Caco-2 (cell line): ENCODE measurements at regions of chr1 and their contacts with region 1.

Region 1: DNA sequence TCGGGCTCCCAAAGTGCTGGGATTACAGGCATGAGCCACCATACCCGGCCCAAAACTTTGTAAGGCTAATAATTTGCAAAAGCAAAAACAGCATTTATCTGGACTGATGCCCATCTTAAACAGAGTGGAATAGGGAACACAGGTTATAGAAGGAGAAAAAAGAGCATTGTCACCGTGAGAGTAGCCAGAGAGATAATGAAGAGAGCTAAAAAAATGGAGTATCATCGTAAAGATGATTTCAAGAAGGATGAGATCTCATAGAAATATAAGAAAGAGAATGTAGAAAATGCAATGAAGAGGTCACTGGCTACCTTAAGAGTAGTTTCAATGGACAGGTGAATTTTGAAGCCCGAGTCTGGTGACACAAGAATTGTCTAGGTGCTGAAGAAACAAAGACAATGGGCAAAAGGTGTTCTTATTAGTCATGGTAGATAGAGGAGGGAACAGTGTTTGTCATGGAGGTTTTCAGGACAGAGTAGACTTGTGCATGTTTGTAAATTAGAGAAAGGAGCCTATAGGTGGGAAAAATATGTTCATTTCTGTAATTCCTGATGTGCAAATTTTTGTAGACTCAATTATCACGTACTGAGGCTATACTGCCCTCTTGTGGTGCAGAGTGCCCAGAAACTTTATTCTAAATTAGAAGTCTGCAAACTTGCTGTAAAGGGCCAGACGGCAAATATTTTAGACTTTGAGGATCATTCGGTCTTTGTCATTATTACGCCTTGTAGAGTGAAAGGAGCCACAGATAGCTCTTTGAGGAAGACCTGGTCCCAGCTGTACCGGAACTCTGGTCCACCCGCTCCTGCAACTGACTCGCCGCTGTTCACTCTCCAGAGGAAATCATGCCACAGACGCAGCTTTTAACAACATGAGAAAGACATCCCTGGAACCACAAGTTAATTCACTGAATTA is 8.1 kb upstream of the TMEM183A start:
- DNase-seq: peak in 1 of 2 experiments; percentile 67
- H3K4me3 ChIP-seq: no peak overlapping the region
- H3K4me3 Mint-ChIP-seq: no peak overlapping the region
- H3K27ac Mint-ChIP-seq: no peak overlapping the region
- H3K4me1 ChIP-seq: peaks cover 8% of the 10 kb centered on the region
- H3K4me1 Mint-ChIP-seq: peaks cover 7% of the 10 kb centered on the region
- H3K27me3 ChIP-seq: no peaks in the 10 kb centered on the region
- H3K27me3 Mint-ChIP-seq: peaks cover 7% of the 10 kb centered on the region
- CTCF ChIP-seq: peak; percentile 74 to 86

Region 2: GRCh38 chr1:202888531-202889360 is 110.3 kb before region 1 on chr1 and contains the start of gene RABIF:
- CTCF ChIA-PET with region 1: no interaction called
- POLR2A ChIA-PET with region 1: no interaction called
- intact Hi-C with region 1: loop called (anchors 2 kb)
- DNase-seq: peak; percentile 96 to 97
- H3K4me3 ChIP-seq: peak within 1 kb of the TSS; percentile 52
- H3K4me3 Mint-ChIP-seq: peak within 1 kb of the TSS; percentile 80
- H3K27ac Mint-ChIP-seq: peak within 1 kb of the TSS; percentile 87
- H3K4me1 ChIP-seq: 0 out of 2 replicates have a peak, but pooled peaks cover 4% of the 10 kb centered on the region
- H3K4me1 Mint-ChIP-seq: peaks cover 15% of the 10 kb centered on the region
- H3K27me3 ChIP-seq: no peaks in the 10 kb centered on the region
- H3K27me3 Mint-ChIP-seq: no peaks in the 10 kb centered on the region
- CTCF ChIP-seq: peak in 1 of 2 experiments; percentile 41
- total RNA-seq, gene RABIF: 9.2 and 9.6 TPM in 2 replicates

Region 3: GRCh38 chr1:202926720-202927491 is 72.2 kb before region 1 on chr1 and contains the start of gene KLHL12:
- CTCF ChIA-PET with region 1: interaction called, 3 read pairs
- POLR2A ChIA-PET with region 1: no interaction called
- intact Hi-C with region 1: loop called (anchors 1 kb)
- DNase-seq: peak; percentile 97 to 98
- H3K4me3 ChIP-seq: peak within 1 kb of the TSS; percentile 73
- H3K4me3 Mint-ChIP-seq: peak within 1 kb of the TSS; percentile 97
- H3K27ac Mint-ChIP-seq: peak within 1 kb of the TSS; percentile 94
- H3K4me1 ChIP-seq: 0 out of 2 replicates have a peak, but pooled peaks cover 3% of the 10 kb centered on the region
- H3K4me1 Mint-ChIP-seq: no peaks in the 10 kb centered on the region
- H3K27me3 ChIP-seq: no peaks in the 10 kb centered on the region
- H3K27me3 Mint-ChIP-seq: no peaks in the 10 kb centered on the region
- CTCF ChIP-seq: peak; percentile 65 to 82
- total RNA-seq, gene KLHL12: 23.2 and 23.6 TPM in 2 replicates

Region 4: DNA sequence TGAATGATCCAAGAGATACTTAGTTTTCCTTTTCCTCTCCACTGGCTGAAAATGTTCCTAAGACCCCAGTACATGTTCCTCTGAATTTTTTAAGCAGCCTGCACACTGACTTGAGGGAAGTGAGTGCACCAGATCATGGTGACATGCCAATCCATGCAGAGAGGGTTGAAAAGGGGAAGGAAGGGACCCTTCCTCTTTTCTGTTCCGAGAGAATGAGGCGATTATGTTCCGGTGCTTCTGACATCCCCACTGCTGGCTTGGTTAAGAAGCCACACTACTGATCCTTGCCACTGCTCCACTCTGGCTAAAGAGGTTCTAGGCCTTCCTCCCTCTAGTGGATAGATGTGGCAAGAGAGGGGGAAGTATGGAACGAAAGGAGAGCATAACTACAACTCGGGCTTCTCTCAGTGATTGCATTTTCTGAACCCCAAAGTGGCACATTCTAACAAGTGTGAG is 30.2 kb before region 1 on chr1:
- CTCF ChIA-PET with region 1: no interaction called
- POLR2A ChIA-PET with region 1: no interaction called
- intact Hi-C with region 1: loop called (anchors 2 kb)
- DNase-seq: peak; percentile 64 to 68
- H3K4me3 ChIP-seq: no peak overlapping the region
- H3K4me3 Mint-ChIP-seq: peak overlapping the region; percentile 83
- H3K27ac Mint-ChIP-seq: no peak overlapping the region
- H3K4me1 ChIP-seq: peaks cover 25% of the 10 kb centered on the region
- H3K4me1 Mint-ChIP-seq: peaks cover 13% of the 10 kb centered on the region
- H3K27me3 ChIP-seq: no peaks in the 10 kb centered on the region; the same call in 1 of the 2 replicates
- H3K27me3 Mint-ChIP-seq: peaks cover 3% of the 10 kb centered on the region
- CTCF ChIP-seq: peak; percentile 66 to 87